ENCODE measurements at regions of chr19 and their contacts with region 1.

Region 1: DNA sequence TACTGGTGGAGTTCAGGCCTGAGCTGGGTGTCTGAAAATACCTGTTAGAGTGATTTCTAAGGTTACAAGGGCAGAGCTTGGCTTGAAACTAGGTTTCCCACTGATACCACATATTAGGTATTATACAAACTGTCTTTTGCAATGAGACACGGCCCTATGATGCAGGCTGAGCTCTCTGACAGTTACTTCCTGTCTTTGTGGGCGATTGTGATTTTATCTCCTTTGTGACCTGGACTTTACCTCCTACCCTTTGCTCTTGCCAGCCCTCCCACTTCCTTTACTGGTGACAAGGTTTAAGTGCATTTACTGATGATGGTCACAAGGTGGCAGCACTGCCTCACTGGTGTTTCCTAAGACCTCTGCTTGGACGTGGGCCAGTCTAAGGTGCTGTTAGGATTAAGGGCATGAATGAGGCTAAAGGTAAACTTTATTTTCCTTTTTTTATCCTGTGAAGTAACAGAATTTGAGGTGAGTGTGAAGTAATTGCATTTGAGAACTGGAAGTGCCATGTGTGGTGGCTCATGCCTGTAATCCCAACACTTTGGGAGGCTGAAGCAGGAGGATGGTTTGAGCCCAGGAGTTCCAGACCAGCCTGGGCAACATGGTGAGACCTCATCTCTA is 7.7 kb upstream of the CXCL17 start:
- DNase-seq: peak; percentile 88 to 95 (median 90)
- ATAC-seq: peak; percentile 97
- H3K4me3 ChIP-seq: no peak overlapping the region
- H3K27ac ChIP-seq: peak overlapping the region; percentile 53
- H3K4me1 ChIP-seq: peaks cover 0 to 9% of the 10 kb centered on the region in 2 experiments; a peak in 3 of 5 replicates
- H3K27me3 ChIP-seq: peaks cover 0 to 9% of the 10 kb centered on the region in 2 experiments; a peak in 4 of 5 replicates
- CTCF ChIP-seq: peak; percentile 87 to 97 (median 90)
- EP300 ChIP-seq: peak; percentile 89
- POLR2A ChIP-seq: no peak
- RAD21 ChIP-seq: peak; percentile 95

Region 2: DNA sequence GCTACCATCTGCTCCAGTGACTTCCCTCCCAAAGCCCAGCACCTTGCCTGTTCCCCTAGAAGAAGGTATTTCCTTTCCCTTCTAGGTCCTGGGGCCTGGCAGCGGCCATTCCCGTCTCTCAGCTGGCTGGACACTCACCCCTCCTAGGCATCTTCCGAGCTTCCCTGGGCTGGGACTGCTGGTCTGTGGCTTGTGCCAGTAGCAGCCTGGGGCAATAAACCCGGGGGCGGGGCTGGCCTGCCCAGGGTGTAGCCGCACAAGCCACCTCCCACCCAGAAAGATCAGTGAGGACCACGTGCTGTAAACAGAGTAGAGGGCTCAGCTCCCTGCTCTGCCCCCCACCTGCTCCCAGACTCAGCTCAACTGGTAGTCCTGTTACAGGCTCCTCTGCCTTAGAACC is 38.2 kb before region 1 on chr19:
- CTCF ChIA-PET with region 1: no interaction called
- POLR2A ChIA-PET with region 1: no interaction called
- in situ Hi-C with region 1: no loop called
- intact Hi-C with region 1: no loop called
- DNase-seq: no peak
- ATAC-seq: no peak
- H3K4me3 ChIP-seq: no peak overlapping the region
- H3K27ac ChIP-seq: no peak overlapping the region
- H3K4me1 ChIP-seq: peaks cover 0 to 28% of the 10 kb centered on the region in 2 experiments; a peak in 2 of 5 replicates
- H3K27me3 ChIP-seq: peaks cover 8% of the 10 kb centered on the region in 2 experiments; a peak in 3 of 5 replicates
- CTCF ChIP-seq: no peak
- EP300 ChIP-seq: no peak
- POLR2A ChIP-seq: no peak
- RAD21 ChIP-seq: no peak

Region 3: DNA sequence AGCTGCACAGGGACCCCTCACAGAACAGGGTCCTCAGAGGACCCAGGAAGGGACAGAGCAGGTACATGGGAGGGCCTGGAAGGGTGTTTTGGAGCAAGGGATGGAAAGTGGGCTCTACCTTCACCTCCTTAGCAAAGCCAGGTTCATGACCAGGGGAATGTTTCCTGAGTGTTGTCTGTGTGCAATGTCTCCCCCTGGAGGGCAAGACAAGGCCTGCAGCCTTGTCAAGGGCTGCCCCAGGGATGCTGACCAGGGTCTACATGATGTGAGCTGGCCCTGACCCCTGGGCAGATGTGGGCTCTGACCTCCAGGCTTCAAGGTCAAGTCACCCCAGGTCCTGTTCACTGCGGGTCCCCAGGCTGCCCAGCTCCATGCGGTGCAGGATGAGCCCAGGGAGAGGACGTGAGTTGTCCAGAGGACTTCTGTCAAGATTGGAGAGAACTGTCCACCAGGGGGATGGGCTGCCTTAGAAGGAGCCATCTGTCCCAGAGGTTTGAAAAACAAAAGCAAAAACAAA is 78.9 kb after region 1 on chr19:
- CTCF ChIA-PET with region 1: interaction called, 26 read pairs
- POLR2A ChIA-PET with region 1: interaction called, 4 read pairs
- in situ Hi-C with region 1: loop called (anchors 5 kb)
- intact Hi-C with region 1: loop called (anchors 1 kb)
- DNase-seq: peak; percentile 72 to 79 (median 78)
- ATAC-seq: peak; percentile 97
- H3K4me3 ChIP-seq: no peak overlapping the region
- H3K27ac ChIP-seq: no peak overlapping the region
- H3K4me1 ChIP-seq: no peaks in the 10 kb centered on the region; a peak in 1 of 5 replicates
- H3K27me3 ChIP-seq: peaks cover 11 to 16% of the 10 kb centered on the region in 2 experiments; a peak in 4 of 5 replicates
- CTCF ChIP-seq: peak; percentile 86 to 96 (median 88)
- EP300 ChIP-seq: no peak
- POLR2A ChIP-seq: no peak
- RAD21 ChIP-seq: peak; percentile 83 to 86

Region 4: GRCh38 chr19:42540071-42540553 is 89.7 kb after region 1 on chr19:
- CTCF ChIA-PET with region 1: interaction called, 11 read pairs
- POLR2A ChIA-PET with region 1: no interaction called
- in situ Hi-C with region 1: no loop called
- intact Hi-C with region 1: no loop called
- DNase-seq: no peak
- ATAC-seq: no peak
- H3K4me3 ChIP-seq: no peak overlapping the region
- H3K27ac ChIP-seq: no peak overlapping the region
- H3K4me1 ChIP-seq: no peaks in the 10 kb centered on the region
- H3K27me3 ChIP-seq: peaks cover 0 to 11% of the 10 kb centered on the region in 2 experiments; a peak in 2 of 5 replicates
- CTCF ChIP-seq: no peak
- EP300 ChIP-seq: no peak
- POLR2A ChIP-seq: no peak
- RAD21 ChIP-seq: no peak

Region 5: DNA sequence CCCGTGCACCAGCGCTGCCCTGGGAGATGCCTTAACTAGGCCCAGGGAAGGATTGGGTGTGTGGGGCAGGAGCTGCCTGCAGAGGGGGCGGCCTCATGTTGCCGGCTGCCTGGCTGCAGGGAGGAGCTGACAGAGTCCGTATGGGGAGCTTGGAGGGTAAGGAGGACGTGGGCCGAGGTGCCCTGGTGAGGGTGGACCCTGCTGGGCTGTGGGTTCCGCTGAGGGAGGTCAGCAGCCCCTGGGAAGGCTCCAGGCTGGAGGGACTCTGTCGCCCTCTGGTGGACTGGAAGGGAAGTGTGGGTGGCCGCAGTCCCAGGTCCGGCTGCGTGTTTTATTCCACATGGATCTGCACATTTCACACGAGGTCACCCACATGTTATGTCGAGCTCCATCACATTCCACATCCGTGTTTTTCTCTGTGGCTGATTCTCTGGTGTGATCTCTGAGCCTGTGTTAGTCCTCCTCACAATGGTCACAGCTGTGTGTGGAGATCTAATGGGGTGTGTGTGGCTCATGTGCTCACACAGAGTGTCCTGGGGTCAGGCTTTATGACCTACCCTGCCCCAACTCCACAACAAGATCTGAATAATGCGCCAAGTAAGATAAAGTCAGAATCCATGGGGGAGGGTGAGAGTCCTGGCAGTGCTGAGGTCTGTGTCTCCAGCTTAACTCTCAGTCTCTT is 146.1 kb after region 1 on chr19:
- CTCF ChIA-PET with region 1: interaction called, 6 read pairs
- POLR2A ChIA-PET with region 1: no interaction called
- in situ Hi-C with region 1: loop called (anchors 10 kb)
- intact Hi-C with region 1: loop called (anchors 2 kb)
- DNase-seq: peak; percentile 47 to 78 (median 68)
- ATAC-seq: peak; percentile 95
- H3K4me3 ChIP-seq: no peak overlapping the region
- H3K27ac ChIP-seq: no peak overlapping the region
- H3K4me1 ChIP-seq: peaks cover 0 to 5% of the 10 kb centered on the region in 2 experiments; a peak in 1 of 5 replicates
- H3K27me3 ChIP-seq: peaks cover 0 to 4% of the 10 kb centered on the region in 2 experiments; a peak in 1 of 5 replicates
- CTCF ChIP-seq: peak; percentile 81 to 92 (median 84)
- EP300 ChIP-seq: no peak
- POLR2A ChIP-seq: no peak
- RAD21 ChIP-seq: peak; percentile 17 to 66; a peak in 2 of 4 replicates

Measured in K562 (cell line).